Thyroid gland (tissue), 4 donors: ENCODE measurements at regions of chr2 and their contacts with region 1.

Region 1: DNA sequence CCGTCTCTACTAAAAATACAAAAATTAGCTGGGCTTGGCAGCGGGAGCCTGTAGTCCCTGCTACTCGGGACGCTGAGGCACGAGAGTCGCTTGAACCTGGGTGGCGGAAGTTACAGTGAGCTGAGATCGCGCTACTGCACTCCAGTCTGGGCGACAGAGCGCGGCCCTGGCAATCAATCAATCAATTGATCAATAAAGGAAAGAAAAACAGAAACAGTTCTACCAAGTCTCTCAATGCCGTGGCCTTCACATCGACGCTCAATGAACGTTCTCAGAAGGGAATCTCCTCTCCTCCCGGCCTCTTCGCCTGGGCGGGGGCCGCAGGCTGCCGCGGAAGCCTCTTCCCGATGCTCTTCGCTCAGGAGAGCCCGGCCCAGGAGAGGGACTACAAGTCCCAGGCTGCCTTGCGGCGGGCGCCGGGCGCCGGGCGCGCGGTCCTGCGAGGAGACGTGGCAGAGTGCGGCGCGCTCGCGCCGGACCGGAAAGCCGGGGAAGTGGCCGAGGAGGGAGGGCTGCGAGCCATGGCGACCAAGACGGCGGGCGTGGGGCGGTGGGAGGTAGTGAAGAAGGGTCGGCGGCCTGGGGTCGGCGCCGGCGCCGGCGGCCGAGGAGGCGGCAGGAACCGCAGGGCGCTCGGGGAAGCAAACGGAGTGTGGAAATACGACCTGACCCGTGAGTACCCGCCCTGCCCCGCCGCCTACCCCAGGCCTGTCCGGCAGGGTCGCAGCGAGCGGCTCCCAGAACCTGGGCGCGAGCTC is at the start of gene TMEM214:
- DNase-seq: peak; percentile 87 to 89
- H3K4me3 ChIP-seq: peak within 1 kb of the TSS; percentile 80 to 98 (median 87)
- H3K27ac ChIP-seq: peak within 1 kb of the TSS; percentile 66 to 80 (median 79)
- H3K4me1 ChIP-seq: peaks cover 14 to 21% of the 10 kb centered on the region in 2 donors
- H3K27me3 ChIP-seq: no peaks in the 10 kb centered on the region
- CTCF ChIP-seq: peak in 1 of 6 experiments; percentile 11
- POLR2A ChIP-seq: peak in 1 of 2 donors; percentile 80
- total RNA-seq, gene TMEM214: 43.3 to 93.8 (median 78.9) TPM

Region 2: DNA sequence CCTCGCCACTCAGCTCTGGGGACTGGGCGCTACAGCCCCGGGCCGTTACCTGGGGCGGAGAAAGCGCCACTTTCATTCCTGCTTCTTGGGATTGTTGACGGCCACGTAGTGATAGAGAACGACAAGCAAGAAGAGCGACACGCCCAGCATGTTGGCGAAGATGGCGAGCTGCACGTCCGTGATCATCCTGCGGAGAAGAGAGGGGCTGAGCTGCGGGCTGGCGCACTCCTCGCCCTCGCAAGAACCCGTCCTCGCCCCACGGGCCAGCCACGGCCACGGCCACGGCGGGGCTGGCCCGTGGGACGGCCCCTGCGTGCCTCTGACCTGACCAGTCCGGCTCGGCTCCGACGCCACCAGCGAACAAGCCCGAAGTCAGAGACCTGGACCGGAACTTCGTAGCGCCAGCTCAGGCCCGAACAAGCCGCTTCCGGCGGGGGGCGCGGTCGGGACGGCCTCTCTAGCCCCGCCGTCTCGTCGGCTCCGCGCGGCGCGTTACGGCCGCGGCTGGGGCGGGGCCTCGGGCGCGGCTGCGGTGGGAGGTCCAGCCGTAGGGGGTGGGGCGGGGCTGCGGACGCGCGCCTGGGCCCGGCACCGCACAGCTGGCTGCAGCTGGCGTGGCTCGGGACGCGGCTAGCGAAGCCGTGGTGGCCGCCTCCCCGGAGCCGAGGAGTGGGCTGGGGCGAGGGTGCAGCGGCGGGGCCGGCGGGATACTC is 38.8 kb after region 1 on chr2 and contains the start of gene OST4:
- intact Hi-C with region 1: loop called (anchors 5 kb)
- DNase-seq: peak; percentile 95
- H3K4me3 ChIP-seq: peak within 1 kb of the TSS; percentile 80 to 98 (median 82)
- H3K27ac ChIP-seq: peak within 1 kb of the TSS; percentile 77 to 90 (median 81)
- H3K4me1 ChIP-seq: peaks cover 21 to 37% of the 10 kb centered on the region in 2 donors
- H3K27me3 ChIP-seq: no peaks in the 10 kb centered on the region
- CTCF ChIP-seq: no peak
- POLR2A ChIP-seq: peak; percentile 27 to 85
- total RNA-seq, gene OST4: 235 to 467 (median 261) TPM